Panc1 (cell line): ENCODE measurements at regions of chr12 and their contacts with region 1.

Region 1: GRCh38 chr12:113285679-113286610 is 49.0 kb downstream of the SLC8B1 start:
- DNase-seq: no peak
- ATAC-seq: no peak
- H3K4me3 ChIP-seq: no peak overlapping the region
- H3K27ac ChIP-seq: no peak overlapping the region
- H3K4me1 ChIP-seq: no peaks in the 10 kb centered on the region
- H3K27me3 ChIP-seq: no peaks in the 10 kb centered on the region
- CTCF ChIP-seq: no peak

Region 2: DNA sequence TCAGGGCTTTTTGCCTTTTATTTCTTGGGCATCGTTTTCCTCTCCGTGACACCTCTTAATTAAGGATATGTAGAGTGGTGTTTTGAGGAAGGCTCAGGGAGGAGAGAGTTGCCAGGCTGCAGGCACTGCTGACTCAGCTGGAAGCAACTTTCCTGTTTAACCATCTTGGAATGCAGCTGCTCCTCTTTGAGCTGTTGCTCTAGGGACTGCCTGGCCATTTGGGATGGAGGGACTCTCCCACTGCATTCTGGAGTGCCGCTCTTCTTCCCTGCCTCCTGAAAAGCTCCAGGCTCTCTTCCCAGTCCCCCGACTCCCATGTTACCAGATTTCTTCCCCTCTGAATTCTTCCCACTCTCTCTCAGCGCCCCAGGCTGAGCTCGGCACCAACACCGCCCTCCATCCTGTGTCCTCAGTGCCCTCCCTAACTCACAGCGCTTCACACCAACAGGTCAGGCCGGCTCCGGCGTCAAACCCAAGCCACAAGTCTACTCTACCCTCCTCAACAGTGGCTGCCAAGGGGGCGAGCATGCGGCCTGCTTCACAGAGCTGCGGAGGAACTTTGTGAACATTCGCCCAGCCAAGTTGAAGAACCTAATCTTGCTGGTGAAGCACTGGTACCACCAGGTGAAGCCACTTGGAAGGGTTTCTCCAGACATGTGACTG is 341.8 kb before region 1 on chr12:
- CTCF ChIA-PET with region 1: no interaction called
- POLR2A ChIA-PET with region 1: no interaction called
- in situ Hi-C with region 1: no loop called
- intact Hi-C with region 1: no loop called
- DNase-seq: no peak
- ATAC-seq: no peak
- H3K4me3 ChIP-seq: no peak overlapping the region
- H3K27ac ChIP-seq: no peak overlapping the region
- H3K4me1 ChIP-seq: peaks cover 8% of the 10 kb centered on the region; the same call in 1 of the 2 replicates
- H3K27me3 ChIP-seq: no peaks in the 10 kb centered on the region
- CTCF ChIP-seq: no peak

Region 3: DNA sequence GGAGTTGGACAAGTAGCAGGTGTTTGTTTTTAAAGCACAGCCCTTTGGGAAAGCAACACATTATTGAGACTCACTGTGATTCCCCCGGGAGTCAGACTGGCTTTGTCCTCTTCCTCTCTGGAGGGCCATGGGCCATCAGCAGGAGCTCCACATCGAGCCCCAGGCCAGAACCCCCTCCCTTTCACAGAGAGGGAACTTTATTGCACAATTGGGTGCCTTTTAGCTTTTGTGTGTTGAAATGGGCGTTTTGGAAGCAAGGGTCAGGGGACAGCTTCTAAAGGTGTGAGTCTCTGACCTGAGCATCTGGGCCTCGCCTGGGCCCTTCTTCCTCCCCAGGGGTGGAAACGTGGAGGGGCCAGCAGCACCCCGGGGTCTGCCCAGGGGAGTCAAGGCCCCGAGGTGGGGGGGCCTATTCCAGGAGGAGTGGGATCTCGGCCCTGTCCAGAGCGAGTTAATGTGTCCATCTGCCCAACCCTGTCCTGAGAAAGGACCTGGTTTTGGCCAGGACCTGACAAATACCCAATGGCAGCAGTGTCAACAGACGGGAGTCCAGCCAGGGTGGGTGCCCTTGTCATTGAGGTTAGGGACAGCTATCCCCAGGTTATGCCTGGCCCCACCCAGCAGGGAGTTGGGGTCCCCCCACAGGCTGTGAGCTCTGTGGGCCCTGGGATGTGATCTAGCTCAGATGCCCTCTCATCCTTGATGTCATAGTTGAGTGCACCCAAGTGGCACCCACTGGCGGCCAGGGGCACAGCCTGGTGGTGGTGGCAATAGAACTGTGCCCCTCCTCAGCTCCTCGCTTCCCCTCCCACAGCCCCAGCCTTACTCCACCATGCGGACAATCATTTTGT is 11.9 kb after region 1 on chr12:
- CTCF ChIA-PET with region 1: no interaction called
- POLR2A ChIA-PET with region 1: interaction called, 11 read pairs
- in situ Hi-C with region 1: no loop called
- intact Hi-C with region 1: no loop called
- DNase-seq: no peak
- ATAC-seq: no peak
- H3K4me3 ChIP-seq: no peak overlapping the region
- H3K27ac ChIP-seq: no peak overlapping the region
- H3K4me1 ChIP-seq: peaks cover 8% of the 10 kb centered on the region
- H3K27me3 ChIP-seq: no peaks in the 10 kb centered on the region
- CTCF ChIP-seq: no peak